HepG2 (cell line): ENCODE measurements at regions of chr6 and their contacts with region 1.

Region 1: DNA sequence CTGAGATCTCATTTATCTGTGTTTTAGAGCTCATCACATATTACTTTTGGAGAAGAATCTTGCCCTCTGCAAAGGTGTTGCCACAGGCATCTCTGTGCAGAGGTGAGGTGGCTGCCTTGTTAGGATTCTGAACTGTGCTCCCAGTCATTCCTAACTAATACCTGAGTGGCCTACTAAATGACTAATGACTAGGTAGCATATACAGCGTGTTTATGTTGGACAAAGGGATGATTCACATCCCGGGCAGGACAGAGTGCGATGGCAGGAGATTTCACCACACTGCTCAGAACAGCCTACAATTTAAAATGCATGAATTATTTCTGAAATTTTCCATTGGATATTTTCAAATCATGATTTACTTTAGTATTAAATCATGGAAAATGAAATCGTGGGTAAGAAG is 23.1 kb upstream of the CGA start:
- DNase-seq: peak; percentile 5
- ATAC-seq: peak; percentile 86
- H3K4me3 ChIP-seq: no peak overlapping the region
- H3K27ac ChIP-seq: no peak overlapping the region
- H3K4me1 ChIP-seq: no peaks in the 10 kb centered on the region
- H3K27me3 ChIP-seq: no peaks in the 10 kb centered on the region
- CTCF ChIP-seq: no peak
- EP300 ChIP-seq: no peak
- POLR2A ChIP-seq: no peak
- RAD21 ChIP-seq: no peak

Region 2: GRCh38 chr6:87082160-87082721 is 35.8 kb before region 1 on chr6:
- CTCF ChIA-PET with region 1: no interaction called
- POLR2A ChIA-PET with region 1: no interaction called
- in situ Hi-C with region 1: no loop called
- intact Hi-C with region 1: loop called (anchors 1 kb)
- DNase-seq: no peak
- ATAC-seq: no peak
- H3K4me3 ChIP-seq: no peak overlapping the region
- H3K27ac ChIP-seq: no peak overlapping the region
- H3K4me1 ChIP-seq: no peaks in the 10 kb centered on the region
- H3K27me3 ChIP-seq: 0 out of 5 replicates have a peak, but pooled peaks cover 0 to 4% of the 10 kb centered on the region in 2 experiments
- CTCF ChIP-seq: no peak
- EP300 ChIP-seq: no peak
- POLR2A ChIP-seq: no peak
- RAD21 ChIP-seq: no peak

Region 3: DNA sequence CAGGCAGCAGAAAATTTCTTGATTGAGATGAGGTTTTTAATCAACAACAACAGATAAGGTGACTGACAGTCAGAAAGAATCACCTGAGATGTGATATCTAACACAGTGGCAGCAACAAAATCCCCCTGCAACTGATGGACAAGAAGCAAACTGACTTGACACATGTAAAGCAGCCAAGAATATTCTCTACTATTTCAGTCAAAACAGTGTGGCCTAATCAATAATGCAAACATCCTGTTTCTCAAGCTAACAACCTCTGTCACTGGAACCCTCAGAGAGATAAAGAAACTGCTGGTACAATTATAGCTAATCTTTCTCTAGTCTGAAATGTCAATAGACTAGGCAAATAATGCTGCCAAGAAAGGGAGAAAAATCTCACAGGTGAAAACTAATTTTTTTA is 18.6 kb before region 1 on chr6:
- CTCF ChIA-PET with region 1: no interaction called
- POLR2A ChIA-PET with region 1: no interaction called
- in situ Hi-C with region 1: no loop called
- intact Hi-C with region 1: no loop called
- DNase-seq: peak; percentile 32
- ATAC-seq: peak; percentile 99
- H3K4me3 ChIP-seq: no peak overlapping the region
- H3K27ac ChIP-seq: no peak overlapping the region
- H3K4me1 ChIP-seq: peaks cover 17% of the 10 kb centered on the region
- H3K27me3 ChIP-seq: peaks cover 0 to 3% of the 10 kb centered on the region in 2 experiments; a peak in 1 of 5 replicates
- CTCF ChIP-seq: no peak
- EP300 ChIP-seq: peak in 1 of 2 experiments; percentile 74; a peak in 2 of 4 replicates
- POLR2A ChIP-seq: no peak
- RAD21 ChIP-seq: no peak